Sigmoid colon (tissue), 7 donors: ENCODE measurements at regions of chr6 and their contacts with region 1.

Region 1: DNA sequence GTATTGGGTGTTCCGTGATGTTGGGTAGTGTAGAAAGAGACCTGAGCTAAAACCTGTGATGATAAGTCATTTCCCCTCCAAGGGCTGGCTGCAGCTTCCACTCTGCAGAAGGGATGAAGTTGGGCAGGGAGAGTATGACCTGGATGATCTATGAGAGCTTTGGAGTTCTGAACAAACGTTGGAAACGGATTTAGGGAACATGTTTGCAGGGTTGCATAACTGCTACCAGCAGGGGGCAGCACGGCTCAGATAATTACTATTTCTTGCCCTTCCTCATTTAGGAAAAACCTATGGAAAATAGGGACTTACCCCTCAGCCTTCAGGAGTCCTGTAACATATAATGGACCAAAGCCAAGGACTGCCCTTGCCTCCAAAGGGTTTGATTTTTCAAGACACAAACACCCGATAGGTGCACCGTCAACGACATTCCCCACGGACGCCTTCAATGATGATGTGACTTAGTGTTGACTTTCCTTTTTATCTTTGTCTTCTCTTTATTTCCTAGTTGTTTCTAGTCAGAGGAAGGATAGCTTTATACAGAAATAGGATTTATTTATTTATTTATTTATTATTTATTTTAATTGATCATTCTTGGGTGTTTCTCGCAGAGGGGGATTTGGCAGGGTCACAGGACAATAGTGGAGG is 164.9 kb upstream of the SASH1 start:
- DNase-seq: peak; percentile 74
- H3K4me3 ChIP-seq: no peak overlapping the region
- H3K27ac ChIP-seq: no peak overlapping the region
- H3K4me1 ChIP-seq: no peaks in the 10 kb centered on the region
- H3K27me3 ChIP-seq: no peaks in the 10 kb centered on the region
- CTCF ChIP-seq: peak; percentile 77 to 87 (median 81)
- EP300 ChIP-seq: no peak
- POLR2A ChIP-seq: no peak

Region 2: DNA sequence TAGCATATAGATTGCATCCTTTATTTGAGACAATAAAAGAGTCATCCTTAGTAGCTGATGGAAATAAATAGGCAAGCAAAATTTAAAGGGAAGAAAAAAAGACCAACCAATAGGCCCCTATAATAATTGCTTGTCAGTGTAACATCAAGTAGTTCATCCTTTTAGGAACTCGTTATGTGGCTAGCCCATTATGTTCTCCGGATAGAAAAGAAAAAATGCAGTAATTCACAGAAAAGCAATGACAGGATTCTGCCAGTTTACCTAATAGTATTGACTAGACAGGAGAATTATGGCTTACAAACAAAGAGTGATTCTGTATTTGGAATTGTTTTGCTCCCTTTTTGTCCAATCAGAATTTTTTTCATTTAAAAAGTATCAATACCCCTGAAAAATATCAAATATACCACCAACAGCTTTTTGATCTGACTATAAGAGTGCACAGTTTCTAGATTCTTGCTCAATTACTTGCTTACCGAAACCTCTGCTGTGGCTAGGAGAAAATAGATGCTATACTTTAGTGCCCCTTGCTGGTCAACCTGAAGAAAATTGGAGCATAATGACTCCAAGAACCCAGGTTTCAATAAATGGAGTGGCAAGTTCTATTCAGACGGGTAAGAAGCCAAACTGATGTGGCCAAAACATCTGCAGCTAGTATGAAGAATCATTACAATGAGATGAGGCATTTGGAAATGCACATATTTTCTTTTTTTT is 73.4 kb after region 1 on chr6:
- intact Hi-C with region 1: loop called (anchors 1 kb)
- DNase-seq: no peak
- H3K4me3 ChIP-seq: no peak overlapping the region
- H3K27ac ChIP-seq: no peak overlapping the region
- H3K4me1 ChIP-seq: peaks cover 0 to 11% (median 4%) of the 10 kb centered on the region in 4 donors
- H3K27me3 ChIP-seq: no peaks in the 10 kb centered on the region
- CTCF ChIP-seq: peak in 3 of 4 experiments; percentile 44 to 53 (median 49)
- EP300 ChIP-seq: no peak
- POLR2A ChIP-seq: no peak

Region 3: GRCh38 chr6:148271711-148272439 is 94.2 kb after region 1 on chr6:
- intact Hi-C with region 1: no loop called
- DNase-seq: no peak
- H3K4me3 ChIP-seq: peak overlapping the region in 1 of 4 donors; percentile 4
- H3K27ac ChIP-seq: peak overlapping the region in 1 of 4 donors; percentile 24
- H3K4me1 ChIP-seq: peaks cover 0 to 14% (median 11%) of the 10 kb centered on the region in 4 donors
- H3K27me3 ChIP-seq: no peaks in the 10 kb centered on the region
- CTCF ChIP-seq: no peak
- EP300 ChIP-seq: no peak
- POLR2A ChIP-seq: no peak